ENCODE measurements at regions of chr17 and their contacts with region 1.

Region 1: DNA sequence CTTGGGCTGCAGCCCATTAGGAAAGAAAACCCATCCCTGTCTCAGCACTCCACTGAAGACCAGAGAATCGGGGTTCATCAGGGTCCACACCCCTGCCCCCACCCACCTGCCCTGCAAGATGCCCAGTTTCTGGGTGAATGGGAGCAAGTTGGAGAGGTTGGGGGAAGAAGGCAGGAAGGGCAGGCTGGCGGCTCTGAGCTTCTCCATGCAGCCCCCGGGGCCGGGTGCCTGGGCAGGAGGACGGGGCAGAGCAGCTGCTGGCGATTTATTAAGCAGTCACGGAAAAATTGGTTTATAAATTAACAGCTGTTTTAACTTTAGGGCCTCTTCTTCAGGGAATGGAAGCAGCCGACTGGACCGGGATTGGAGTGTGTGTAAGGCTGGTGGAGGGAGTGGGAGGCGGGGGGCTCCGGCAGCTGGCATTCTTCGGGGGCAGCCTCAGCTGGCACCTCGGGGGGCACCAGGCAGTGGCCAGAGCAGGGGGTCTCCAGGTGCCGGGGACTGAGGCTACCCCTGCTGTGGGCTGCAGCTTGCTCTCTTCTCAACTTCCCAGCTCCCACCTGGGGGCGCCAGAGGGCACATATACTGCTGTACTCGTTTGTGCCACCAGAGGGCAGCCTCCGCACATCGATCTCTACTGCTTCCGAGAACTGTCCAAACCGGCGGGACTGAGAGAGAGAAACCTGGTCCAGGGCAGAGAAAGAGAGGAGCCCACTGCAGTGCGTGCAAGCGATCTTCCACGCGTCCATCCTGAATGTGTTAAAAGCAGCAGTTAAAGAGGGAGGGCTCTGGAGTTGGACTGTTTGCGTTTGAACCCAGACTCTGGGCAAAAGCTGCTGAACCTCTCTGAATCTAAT is 5.0 kb upstream of the PPP1R1B start:
- DNase-seq: peak; percentile 82 to 90 (median 84)
- H3K4me3 ChIP-seq: peak overlapping the region in 1 of 2 donors; percentile 50
- H3K4me3 Mint-ChIP-seq: peak overlapping the region; percentile 65 to 85 (median 80)
- H3K27ac ChIP-seq: peak overlapping the region; percentile 4
- H3K27ac Mint-ChIP-seq: peak overlapping the region; percentile 54 to 90 (median 86)
- H3K4me1 ChIP-seq: peaks cover 36% of the 10 kb centered on the region
- H3K4me1 Mint-ChIP-seq: peaks cover 13 to 31% (median 20%) of the 10 kb centered on the region in 4 donors
- H3K27me3 ChIP-seq: peaks cover 14% of the 10 kb centered on the region
- H3K27me3 Mint-ChIP-seq: peaks cover 14 to 18% of the 10 kb centered on the region in 2 donors

Region 2: DNA sequence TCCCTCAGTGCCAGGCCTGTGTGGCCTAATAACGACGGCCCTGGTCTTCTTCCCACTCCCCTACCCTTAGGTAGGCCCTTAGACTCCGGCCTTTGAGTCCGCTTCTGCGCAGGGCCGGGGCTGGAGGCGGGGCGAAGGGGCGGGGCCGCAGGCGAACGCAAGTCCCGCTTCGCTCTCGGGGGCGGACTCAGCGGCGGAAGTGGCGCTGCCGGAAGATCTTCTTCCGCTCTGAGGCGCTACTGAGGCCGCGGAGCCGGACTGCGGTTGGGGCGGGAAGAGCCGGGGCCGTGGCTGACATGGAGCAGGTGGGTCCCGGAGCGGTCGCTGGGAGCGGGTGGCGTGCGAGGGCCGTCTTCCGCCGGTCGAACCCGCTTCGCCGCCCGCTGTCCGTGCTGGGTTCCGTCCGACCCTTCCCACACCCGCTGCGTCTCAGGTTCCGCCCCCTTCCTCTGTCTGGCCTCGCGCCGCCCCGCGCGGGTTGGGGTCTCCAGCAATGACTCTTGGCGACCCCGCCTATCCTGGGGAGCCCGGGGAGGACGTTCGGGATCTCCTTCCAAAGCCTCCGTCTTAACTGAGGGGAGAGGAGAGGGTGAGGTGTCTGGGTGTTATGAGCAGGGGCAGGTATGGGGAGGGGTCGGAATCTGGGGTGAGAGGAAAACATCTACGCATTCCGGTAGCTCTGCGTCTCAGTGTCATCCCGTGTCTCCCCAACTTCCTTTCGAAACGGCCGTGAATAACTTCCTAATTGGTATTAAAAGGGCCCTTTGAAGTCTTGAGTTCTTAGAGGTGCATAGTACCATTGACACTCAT is 15.4 kb after region 1 on chr17 and contains the start of gene STARD3:
- CTCF ChIA-PET with region 1: interaction called, 114 read pairs
- POLR2A ChIA-PET with region 1: interaction called, 12 read pairs
- intact Hi-C with region 1: loop called (anchors 1 kb)
- DNase-seq: peak; percentile 85 to 92 (median 87)
- H3K4me3 ChIP-seq: peak within 1 kb of the TSS; percentile 86 to 88
- H3K4me3 Mint-ChIP-seq: peak within 1 kb of the TSS; percentile 92 to 98 (median 96)
- H3K27ac ChIP-seq: peak within 1 kb of the TSS; percentile 97
- H3K27ac Mint-ChIP-seq: peak within 1 kb of the TSS; percentile 84 to 98 (median 96)
- H3K4me1 ChIP-seq: peaks cover 61% of the 10 kb centered on the region
- H3K4me1 Mint-ChIP-seq: peaks cover 33 to 62% (median 49%) of the 10 kb centered on the region in 4 donors
- H3K27me3 ChIP-seq: no peaks in the 10 kb centered on the region
- H3K27me3 Mint-ChIP-seq: peaks cover 0 to 1% of the 10 kb centered on the region in 2 donors
- total RNA-seq, gene STARD3: 105 to 110 TPM

Region 3: DNA sequence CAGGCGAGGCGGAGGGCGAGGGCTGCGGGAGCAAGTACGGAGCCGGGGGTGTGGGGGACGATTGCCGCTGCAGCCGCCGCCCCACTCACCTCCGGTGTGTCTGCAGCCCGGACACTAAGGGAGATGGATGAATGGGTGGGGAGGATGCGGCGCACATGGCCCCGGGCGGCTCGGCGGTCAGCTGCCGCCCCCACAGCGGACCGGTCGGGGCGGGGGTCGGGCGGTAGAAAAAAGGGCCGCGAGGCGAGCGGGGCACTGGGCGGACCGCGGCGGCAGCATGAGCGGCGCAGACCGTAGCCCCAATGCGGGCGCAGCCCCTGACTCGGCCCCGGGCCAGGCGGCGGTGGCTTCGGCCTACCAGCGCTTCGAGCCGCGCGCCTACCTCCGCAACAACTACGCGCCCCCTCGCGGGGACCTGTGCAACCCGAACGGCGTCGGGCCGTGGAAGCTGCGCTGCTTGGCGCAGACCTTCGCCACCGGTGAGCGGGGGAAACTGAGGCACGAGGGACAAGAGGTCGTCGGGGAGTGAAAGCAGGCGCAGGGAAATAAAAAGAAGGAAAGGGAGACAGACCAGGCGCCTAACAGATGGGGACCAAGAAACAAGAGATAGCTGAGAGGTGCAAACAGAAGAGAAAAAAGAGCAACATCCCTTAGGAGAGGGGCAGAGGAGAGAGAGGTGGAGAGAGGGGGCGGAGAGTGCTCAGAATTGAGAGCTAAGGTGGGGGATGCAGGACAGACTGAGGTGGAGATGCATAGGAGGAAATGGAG is 46.6 kb after region 1 on chr17 and contains the start of gene PNMT:
- CTCF ChIA-PET with region 1: interaction called, 46 read pairs
- POLR2A ChIA-PET with region 1: interaction called, 3 read pairs
- intact Hi-C with region 1: loop called (anchors 2 kb)
- DNase-seq: peak; percentile 57 to 63 (median 61)
- H3K4me3 ChIP-seq: peak within 1 kb of the TSS in 1 of 2 donors; percentile 45
- H3K4me3 Mint-ChIP-seq: peak within 1 kb of the TSS; percentile 60 to 80 (median 72)
- H3K27ac ChIP-seq: no peak within 1 kb of the TSS
- H3K27ac Mint-ChIP-seq: peak within 1 kb of the TSS in 5 of 7 donors; percentile 21 to 80 (median 41)
- H3K4me1 ChIP-seq: peaks cover 12% of the 10 kb centered on the region
- H3K4me1 Mint-ChIP-seq: peaks cover 6 to 24% (median 7%) of the 10 kb centered on the region in 4 donors
- H3K27me3 ChIP-seq: peaks cover 12% of the 10 kb centered on the region
- H3K27me3 Mint-ChIP-seq: peaks cover 4 to 10% of the 10 kb centered on the region in 2 donors
- total RNA-seq, gene PNMT: 0.55 TPM in 1 of 2 experiments, not detected in the other

Region 4: GRCh38 chr17:39730095-39730921 is 108.6 kb after region 1 on chr17 and contains the start of gene MIEN1:
- CTCF ChIA-PET with region 1: interaction called, 47 read pairs
- POLR2A ChIA-PET with region 1: interaction called, 15 read pairs
- intact Hi-C with region 1: loop called (anchors 1 kb)
- DNase-seq: peak; percentile 87 to 97 (median 93)
- H3K4me3 ChIP-seq: peak within 1 kb of the TSS; percentile 92 to 94
- H3K4me3 Mint-ChIP-seq: peak within 1 kb of the TSS; percentile 90 to 94 (median 92)
- H3K27ac ChIP-seq: peak within 1 kb of the TSS; percentile 91
- H3K27ac Mint-ChIP-seq: peak within 1 kb of the TSS; percentile 86 to 95 (median 93)
- H3K4me1 ChIP-seq: peaks cover 22% of the 10 kb centered on the region
- H3K4me1 Mint-ChIP-seq: peaks cover 6 to 33% (median 12%) of the 10 kb centered on the region in 4 donors
- H3K27me3 ChIP-seq: no peaks in the 10 kb centered on the region
- H3K27me3 Mint-ChIP-seq: no peaks in the 10 kb centered on the region
- total RNA-seq, gene MIEN1: 35.8 TPM

Region 5: DNA sequence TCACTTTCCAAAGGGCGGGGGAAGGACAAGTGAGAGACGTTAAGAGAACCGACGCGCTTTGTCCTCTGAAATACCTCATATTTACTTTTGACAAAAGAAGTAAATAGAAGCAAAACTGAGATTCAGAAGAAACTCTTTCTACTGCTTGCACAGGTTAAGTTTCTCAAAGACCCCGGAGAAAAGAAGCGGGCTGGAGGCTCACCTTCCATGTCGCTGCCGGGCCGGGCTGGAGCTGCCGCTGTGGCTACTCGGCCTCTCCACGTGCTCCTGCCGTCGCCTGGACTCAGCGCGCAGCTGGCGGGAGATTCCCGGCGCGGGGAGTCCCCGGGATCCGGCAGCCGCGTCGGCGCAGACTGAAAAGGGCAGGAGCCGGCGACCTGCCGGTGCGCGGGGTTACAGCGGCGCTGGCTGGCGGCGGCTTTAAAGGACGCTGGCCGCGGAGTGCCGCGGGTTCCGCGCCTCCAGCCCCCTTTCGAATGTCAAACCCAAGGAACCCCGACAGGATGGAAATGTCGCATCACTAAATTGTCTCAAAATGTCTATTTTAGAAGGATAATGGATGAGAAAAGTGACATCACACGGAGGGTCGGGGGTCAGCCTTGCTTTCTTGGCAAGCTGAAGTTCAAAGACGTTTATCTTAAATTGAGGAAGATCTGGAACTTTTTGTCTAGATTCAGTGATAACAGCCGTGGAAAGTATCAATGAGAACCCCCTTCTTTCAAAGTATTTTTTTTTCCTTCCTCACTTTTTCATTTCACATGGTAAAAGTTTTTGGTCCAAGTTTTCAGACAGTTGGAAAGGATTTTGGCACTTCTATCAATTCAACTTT is 242.4 kb after region 1 on chr17 and contains the start of gene IKZF3:
- CTCF ChIA-PET with region 1: interaction called, 44 read pairs
- POLR2A ChIA-PET with region 1: interaction called, 7 read pairs
- intact Hi-C with region 1: loop called (anchors 2 kb)
- DNase-seq: peak; percentile 82 to 90 (median 83)
- H3K4me3 ChIP-seq: peak within 1 kb of the TSS; percentile 55 to 80
- H3K4me3 Mint-ChIP-seq: peak within 1 kb of the TSS; percentile 91 to 97 (median 94)
- H3K27ac ChIP-seq: peak within 1 kb of the TSS; percentile 93
- H3K27ac Mint-ChIP-seq: peak within 1 kb of the TSS; percentile 94 to 99 (median 96)
- H3K4me1 ChIP-seq: peaks cover 68% of the 10 kb centered on the region
- H3K4me1 Mint-ChIP-seq: peaks cover 52 to 93% (median 67%) of the 10 kb centered on the region in 4 donors
- H3K27me3 ChIP-seq: no peaks in the 10 kb centered on the region
- H3K27me3 Mint-ChIP-seq: no peaks in the 10 kb centered on the region
- total RNA-seq, gene IKZF3: 116 to 118 TPM

Region 6: DNA sequence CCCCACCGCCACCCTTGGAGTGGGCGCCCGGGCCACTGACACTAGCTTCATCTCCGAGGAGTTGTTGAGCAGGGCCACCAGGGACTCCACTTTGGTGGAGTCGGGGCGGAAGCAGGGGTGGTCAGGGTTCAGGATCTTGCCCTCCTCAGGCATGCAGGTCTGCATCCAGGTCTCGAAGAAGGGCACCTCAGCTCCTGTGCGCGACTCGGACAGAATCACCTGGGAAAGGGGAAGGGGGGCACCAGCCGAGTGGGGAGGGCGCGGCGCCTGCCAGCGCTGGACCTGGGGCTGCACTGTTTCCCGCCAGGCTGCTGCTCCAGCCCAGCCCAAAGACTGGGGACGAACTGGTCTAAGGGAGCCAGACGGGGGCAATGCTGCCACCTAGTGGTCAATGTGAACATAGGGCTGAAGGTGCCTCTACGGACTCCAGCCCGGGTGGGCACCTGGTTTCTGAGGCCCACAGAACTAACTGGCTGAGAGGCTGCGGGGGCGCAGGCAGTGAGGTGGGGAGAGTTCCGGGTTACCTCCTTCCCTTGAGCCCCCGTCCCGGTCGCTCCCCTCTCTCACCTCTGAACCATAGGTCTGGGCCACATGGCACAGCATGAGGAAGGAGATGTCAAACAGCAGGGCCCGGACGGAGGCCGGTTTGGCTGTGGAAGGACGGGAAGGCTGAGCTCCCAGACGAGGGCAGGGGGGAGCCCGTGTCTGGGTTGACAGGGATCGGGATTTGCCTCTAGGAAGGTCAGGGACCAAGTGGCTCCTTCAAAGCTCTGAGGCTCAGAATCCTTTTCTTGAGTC is 405.3 kb after region 1 on chr17:
- CTCF ChIA-PET with region 1: interaction called, 3 read pairs
- POLR2A ChIA-PET with region 1: interaction called, 3 read pairs
- intact Hi-C with region 1: loop called (anchors 1 kb)
- DNase-seq: peak; percentile 67 to 78 (median 69)
- H3K4me3 ChIP-seq: no peak overlapping the region
- H3K4me3 Mint-ChIP-seq: peak overlapping the region in 3 of 8 donors; percentile 46 to 75 (median 56)
- H3K27ac ChIP-seq: no peak overlapping the region
- H3K27ac Mint-ChIP-seq: peak overlapping the region in 4 of 7 donors; percentile 15 to 52 (median 32)
- H3K4me1 ChIP-seq: peaks cover 25% of the 10 kb centered on the region
- H3K4me1 Mint-ChIP-seq: peaks cover 19 to 24% (median 21%) of the 10 kb centered on the region in 4 donors
- H3K27me3 ChIP-seq: no peaks in the 10 kb centered on the region
- H3K27me3 Mint-ChIP-seq: no peaks in the 10 kb centered on the region

Measured in CD4-positive, alpha-beta memory T cell (primary cell).